PC-3 (cell line): ENCODE measurements at regions of chr21 and their contacts with region 1.

Region 1: DNA sequence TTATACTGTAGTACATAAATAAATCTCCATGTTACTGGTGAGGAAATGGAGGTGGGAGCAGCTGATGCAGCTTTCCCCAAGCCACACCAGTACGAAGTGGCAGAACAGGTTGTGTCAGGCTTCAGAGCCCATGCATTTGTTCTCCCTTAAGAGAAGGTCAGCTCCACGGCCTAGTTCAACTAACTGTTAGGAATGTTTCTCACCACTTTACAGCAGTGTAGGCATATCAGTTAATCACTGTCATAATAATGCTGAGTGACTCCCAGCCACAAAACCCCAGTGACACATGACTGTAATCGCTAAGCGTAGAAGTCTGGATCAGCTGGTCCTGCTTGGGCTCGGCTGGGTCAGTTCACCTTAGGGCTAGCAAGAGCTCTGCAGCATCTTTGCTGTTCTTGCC is 90.4 kb downstream of the VPS26C start:
- DNase-seq: peak; percentile 76
- ATAC-seq: peak; percentile 25
- H3K4me3 ChIP-seq: no peak overlapping the region
- H3K27ac ChIP-seq: peak overlapping the region; percentile 21; the same call in 1 of the 2 replicates
- H3K4me1 ChIP-seq: peaks cover 11% of the 10 kb centered on the region
- H3K27me3 ChIP-seq: no peaks in the 10 kb centered on the region
- CTCF ChIP-seq: no peak

Region 2: DNA sequence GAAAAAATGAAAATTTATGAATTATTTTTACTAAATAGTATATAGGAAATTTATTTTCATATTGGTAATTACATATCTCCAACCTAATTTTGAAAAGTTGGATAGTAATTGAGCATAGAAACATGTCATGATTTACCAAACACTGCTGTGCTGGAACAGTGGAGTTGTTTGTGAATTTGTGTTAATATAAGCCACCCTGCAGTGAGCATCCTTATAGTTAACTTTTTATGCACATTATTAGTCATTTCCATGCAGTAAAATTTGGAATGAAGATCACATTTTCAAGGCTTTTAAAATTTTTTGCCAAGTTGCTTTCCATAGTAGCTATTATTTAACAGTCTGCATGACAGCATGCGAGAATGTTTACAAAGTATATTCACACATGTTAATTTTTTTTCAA is 12.1 kb after region 1 on chr21:
- CTCF ChIA-PET with region 1: no interaction called
- POLR2A ChIA-PET with region 1: interaction called, 14 read pairs
- intact Hi-C with region 1: no loop called
- DNase-seq: peak; percentile 39
- ATAC-seq: peak; percentile 92
- H3K4me3 ChIP-seq: no peak overlapping the region
- H3K27ac ChIP-seq: no peak overlapping the region
- H3K4me1 ChIP-seq: no peaks in the 10 kb centered on the region
- H3K27me3 ChIP-seq: no peaks in the 10 kb centered on the region
- CTCF ChIP-seq: no peak

Region 3: GRCh38 chr21:37199057-37199924 is 22.6 kb after region 1 on chr21:
- CTCF ChIA-PET with region 1: interaction called, 10 read pairs
- POLR2A ChIA-PET with region 1: no interaction called
- intact Hi-C with region 1: no loop called
- DNase-seq: peak; percentile 91
- ATAC-seq: peak; percentile 95
- H3K4me3 ChIP-seq: peak overlapping the region; percentile 18; the same call in 1 of the 2 replicates
- H3K27ac ChIP-seq: peak overlapping the region; percentile 85
- H3K4me1 ChIP-seq: peaks cover 30% of the 10 kb centered on the region
- H3K27me3 ChIP-seq: no peaks in the 10 kb centered on the region
- CTCF ChIP-seq: no peak

Region 4: DNA sequence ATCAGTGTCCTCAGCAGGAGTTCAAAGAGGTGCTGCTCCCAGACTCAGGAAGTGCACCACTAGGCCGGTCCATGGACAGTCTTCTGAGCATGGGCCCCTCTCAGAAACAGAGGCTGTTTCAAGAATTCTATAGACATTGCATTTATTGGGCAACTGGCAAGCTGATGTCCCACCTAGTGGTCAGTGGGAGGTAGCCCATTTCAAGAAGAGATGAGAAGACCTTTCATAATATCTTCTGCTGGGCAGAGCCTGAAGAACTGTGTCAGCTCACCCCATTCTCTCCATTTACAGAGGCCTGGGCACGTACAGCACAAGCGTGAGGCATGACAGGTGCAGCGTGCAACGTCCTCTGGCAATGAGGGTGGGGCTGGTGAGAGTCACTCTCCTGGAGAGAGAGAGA is 405.9 kb after region 1 on chr21:
- CTCF ChIA-PET with region 1: no interaction called
- POLR2A ChIA-PET with region 1: no interaction called
- intact Hi-C with region 1: loop called (anchors 10 kb)
- DNase-seq: peak; percentile 68
- ATAC-seq: peak; percentile 99
- H3K4me3 ChIP-seq: no peak overlapping the region
- H3K27ac ChIP-seq: no peak overlapping the region
- H3K4me1 ChIP-seq: no peaks in the 10 kb centered on the region
- H3K27me3 ChIP-seq: no peaks in the 10 kb centered on the region
- CTCF ChIP-seq: peak; percentile 91